Naive thymus-derived CD4-positive, alpha-beta T cell (primary cell): ENCODE measurements at regions of chr2 and their contacts with region 1.

Region 1: DNA sequence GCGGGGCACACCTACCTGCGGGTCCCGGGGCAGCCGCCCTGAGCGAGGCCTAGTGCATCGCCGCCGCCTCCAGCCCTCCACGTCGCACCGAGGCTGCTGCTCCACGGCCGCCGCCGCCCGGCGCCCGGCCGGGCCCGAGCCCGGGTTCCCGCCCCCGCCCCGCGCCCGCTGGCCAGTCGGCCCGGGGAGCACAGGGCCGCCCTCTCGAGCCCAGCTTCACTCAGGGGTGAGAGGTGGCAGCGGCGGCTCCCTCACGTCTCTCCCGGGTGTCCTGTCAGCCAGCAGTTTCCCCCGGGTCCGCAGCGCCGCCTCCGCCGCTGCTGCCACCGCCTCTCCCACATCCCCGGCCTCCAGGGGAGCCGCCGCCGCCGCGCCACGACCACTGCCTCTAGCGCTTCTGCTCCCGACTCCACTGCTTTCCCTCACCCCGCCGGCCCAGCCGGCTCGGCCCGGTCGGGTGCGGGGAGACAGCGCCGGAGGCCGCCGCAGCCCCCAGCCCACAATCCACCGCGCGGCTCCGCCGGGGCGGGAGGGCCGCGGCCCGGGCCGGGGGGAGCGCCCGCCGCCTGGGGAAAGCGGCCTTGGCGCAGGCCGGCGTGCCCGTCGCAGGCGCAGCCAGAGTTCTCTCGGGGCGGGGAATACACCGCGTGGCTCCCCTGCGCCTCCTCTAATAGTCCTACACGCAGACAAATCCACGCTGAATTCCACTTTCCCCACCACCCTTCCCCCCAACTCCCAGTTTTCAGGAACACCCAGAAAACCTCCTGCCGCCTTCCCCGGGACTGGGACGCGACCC is at the start of gene VPS54:
- DNase-seq: peak; percentile 42 to 76 (median 65)
- ATAC-seq: peak; percentile 87
- H3K4me3 ChIP-seq: peak within 1 kb of the TSS; percentile 86
- H3K4me3 Mint-ChIP-seq: peak within 1 kb of the TSS; percentile 94 to 100 (median 98)
- H3K27ac ChIP-seq: peak within 1 kb of the TSS; percentile 79
- H3K27ac Mint-ChIP-seq: peak within 1 kb of the TSS; percentile 95 to 100 (median 97)
- H3K4me1 ChIP-seq: peaks cover 22 to 31% of the 10 kb centered on the region in 2 donors
- H3K4me1 Mint-ChIP-seq: peaks cover 20 to 60% (median 48%) of the 10 kb centered on the region in 7 donors
- H3K27me3 ChIP-seq: no peaks in the 10 kb centered on the region
- H3K27me3 Mint-ChIP-seq: no peaks in the 10 kb centered on the region
- total RNA-seq, gene VPS54: 13.2 to 20.8 (median 15.6) TPM

Region 2: DNA sequence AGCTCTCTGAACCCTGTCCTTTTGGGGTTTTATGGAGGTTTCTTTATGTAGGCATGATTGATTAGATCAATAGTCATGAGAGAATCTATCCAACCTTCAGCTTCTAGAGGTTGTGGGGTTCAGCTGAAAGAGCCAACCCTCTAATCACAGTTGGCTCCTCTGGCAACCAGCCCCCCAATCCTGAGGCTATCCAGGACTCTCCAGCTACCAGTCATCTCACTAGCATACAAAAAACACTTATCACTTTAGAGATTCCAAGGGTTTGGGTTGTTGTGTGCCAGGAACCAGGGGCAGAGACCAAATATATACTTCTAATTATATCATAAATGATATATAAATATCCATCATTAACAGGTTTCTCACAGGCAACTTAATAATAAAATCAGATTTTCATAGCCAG is 442.6 kb before region 1 on chr2:
- CTCF ChIA-PET with region 1: no interaction called
- POLR2A ChIA-PET with region 1: no interaction called
- intact Hi-C with region 1: no loop called
- DNase-seq: no peak
- ATAC-seq: no peak
- H3K4me3 ChIP-seq: no peak overlapping the region
- H3K4me3 Mint-ChIP-seq: no peak overlapping the region
- H3K27ac ChIP-seq: no peak overlapping the region
- H3K27ac Mint-ChIP-seq: no peak overlapping the region
- H3K4me1 ChIP-seq: no peaks in the 10 kb centered on the region
- H3K4me1 Mint-ChIP-seq: peaks cover 0 to 16% (median 13%) of the 10 kb centered on the region in 7 donors
- H3K27me3 ChIP-seq: no peaks in the 10 kb centered on the region
- H3K27me3 Mint-ChIP-seq: no peaks in the 10 kb centered on the region

Region 3: DNA sequence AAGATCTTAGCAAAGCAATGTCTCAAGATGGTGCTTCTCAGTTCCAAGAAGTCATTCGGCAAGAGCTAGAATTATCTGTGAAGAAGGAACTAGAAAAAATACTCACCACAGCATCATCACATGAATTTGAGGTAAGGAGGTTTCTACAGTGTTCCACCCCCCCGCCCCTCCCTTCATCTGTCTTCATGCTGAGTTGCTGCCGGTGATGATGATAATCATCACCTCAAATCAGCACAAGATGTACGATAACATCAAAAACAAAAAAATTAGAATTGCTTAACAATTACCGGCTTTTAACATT is 162.9 kb before region 1 on chr2:
- CTCF ChIA-PET with region 1: no interaction called
- POLR2A ChIA-PET with region 1: no interaction called
- intact Hi-C with region 1: loop called in 1 of 2 experiments (anchors 5 kb)
- DNase-seq: peak in 7 of 9 donors; percentile 54 to 87 (median 78)
- ATAC-seq: peak; percentile 93
- H3K4me3 ChIP-seq: peak overlapping the region; percentile 28
- H3K4me3 Mint-ChIP-seq: peak overlapping the region; percentile 42 to 78 (median 73)
- H3K27ac ChIP-seq: peak overlapping the region; percentile 81
- H3K27ac Mint-ChIP-seq: peak overlapping the region; percentile 85 to 97 (median 93)
- H3K4me1 ChIP-seq: peaks cover 27 to 36% of the 10 kb centered on the region in 2 donors
- H3K4me1 Mint-ChIP-seq: peaks cover 40 to 73% (median 71%) of the 10 kb centered on the region in 7 donors
- H3K27me3 ChIP-seq: no peaks in the 10 kb centered on the region
- H3K27me3 Mint-ChIP-seq: no peaks in the 10 kb centered on the region

Region 4: GRCh38 chr2:63983986-63984605 is 35.0 kb before region 1 on chr2:
- CTCF ChIA-PET with region 1: no interaction called
- POLR2A ChIA-PET with region 1: interaction called, 3 read pairs
- intact Hi-C with region 1: loop called (anchors 5 kb)
- DNase-seq: no peak
- ATAC-seq: no peak
- H3K4me3 ChIP-seq: no peak overlapping the region
- H3K4me3 Mint-ChIP-seq: no peak overlapping the region
- H3K27ac ChIP-seq: no peak overlapping the region
- H3K27ac Mint-ChIP-seq: peak overlapping the region in 1 of 9 donors; percentile 15
- H3K4me1 ChIP-seq: peaks cover 0 to 11% of the 10 kb centered on the region in 2 donors
- H3K4me1 Mint-ChIP-seq: peaks cover 11 to 56% (median 51%) of the 10 kb centered on the region in 7 donors
- H3K27me3 ChIP-seq: no peaks in the 10 kb centered on the region
- H3K27me3 Mint-ChIP-seq: no peaks in the 10 kb centered on the region

Region 5: DNA sequence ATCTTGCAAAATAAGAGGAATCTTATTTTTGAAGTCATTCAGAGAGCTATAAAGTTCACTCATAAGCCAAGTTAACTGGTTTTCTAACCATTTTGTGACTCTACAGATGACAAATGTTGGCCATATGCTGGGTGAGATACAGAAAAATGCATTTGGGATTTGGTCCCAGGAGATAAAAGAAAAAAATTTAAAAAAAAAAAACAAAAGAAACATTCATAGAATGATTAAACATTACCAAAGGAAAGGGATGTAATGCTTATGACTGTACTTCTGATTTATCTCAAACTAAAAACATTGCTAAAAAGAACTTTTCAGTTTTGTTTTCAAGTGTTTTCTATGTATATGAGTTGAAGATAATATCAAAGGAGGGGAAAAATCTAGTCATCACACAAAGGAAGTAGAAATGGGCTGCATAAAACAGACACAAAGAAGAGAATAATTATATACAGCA is 82.0 kb after region 1 on chr2:
- CTCF ChIA-PET with region 1: no interaction called
- POLR2A ChIA-PET with region 1: no interaction called
- intact Hi-C with region 1: loop called in 1 of 2 experiments (anchors 5 kb)
- DNase-seq: peak in 6 of 9 donors; percentile 10 to 57 (median 44)
- ATAC-seq: peak; percentile 56
- H3K4me3 ChIP-seq: no peak overlapping the region
- H3K4me3 Mint-ChIP-seq: peak overlapping the region in 9 of 10 donors; percentile 18 to 83 (median 55)
- H3K27ac ChIP-seq: peak overlapping the region; percentile 33
- H3K27ac Mint-ChIP-seq: peak overlapping the region; percentile 44 to 88 (median 80)
- H3K4me1 ChIP-seq: peaks cover 0 to 16% of the 10 kb centered on the region in 2 donors
- H3K4me1 Mint-ChIP-seq: peaks cover 14 to 66% (median 60%) of the 10 kb centered on the region in 7 donors
- H3K27me3 ChIP-seq: no peaks in the 10 kb centered on the region
- H3K27me3 Mint-ChIP-seq: no peaks in the 10 kb centered on the region

Region 6: DNA sequence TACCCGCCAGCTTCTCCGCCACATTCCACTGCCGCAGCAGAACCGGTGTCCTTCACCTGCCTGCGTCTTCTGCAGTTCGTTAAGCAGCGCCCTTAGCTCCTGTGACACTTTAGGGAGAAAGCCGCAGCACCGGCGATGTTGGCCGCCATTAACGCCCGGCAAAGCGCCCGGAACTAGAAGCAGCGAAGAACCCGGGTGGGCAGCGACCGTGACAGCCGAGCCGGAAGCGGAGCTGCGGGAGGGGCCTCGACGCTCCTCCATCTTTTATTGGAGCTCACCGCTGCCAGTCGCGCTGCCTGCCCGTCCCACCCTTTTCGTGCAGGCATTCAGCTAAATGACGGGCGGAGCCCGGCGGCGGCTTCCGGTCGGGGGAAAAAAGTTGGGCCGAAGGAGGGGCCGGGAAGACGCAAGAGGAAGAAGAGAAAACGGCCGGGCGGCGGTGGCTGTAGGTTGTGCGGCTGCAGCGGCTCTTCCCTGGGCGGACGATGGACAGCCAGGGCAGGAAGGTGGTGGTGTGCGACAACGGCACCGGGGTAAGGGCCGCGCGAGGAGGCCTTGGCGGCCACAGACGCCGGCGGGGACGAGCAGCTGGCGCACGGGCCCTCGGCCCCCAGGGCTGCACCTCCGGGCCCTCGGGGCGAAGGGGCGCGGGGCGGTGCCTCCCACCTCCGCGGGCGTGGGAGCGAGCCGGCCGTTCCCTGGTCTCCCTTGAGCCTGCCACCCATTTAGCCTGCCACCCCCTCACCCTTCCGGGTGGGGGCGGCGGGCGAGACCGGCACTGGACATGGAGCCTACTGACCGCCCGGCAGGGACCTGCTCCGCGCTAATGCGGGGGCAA is 1208.5 kb after region 1 on chr2 and contains the start of gene ACTR2:
- CTCF ChIA-PET with region 1: no interaction called
- POLR2A ChIA-PET with region 1: no interaction called
- intact Hi-C with region 1: loop called in 1 of 2 experiments (anchors 5 kb)
- DNase-seq: peak; percentile 86 to 94 (median 93)
- ATAC-seq: peak; percentile 97
- H3K4me3 ChIP-seq: peak within 1 kb of the TSS; percentile 99
- H3K4me3 Mint-ChIP-seq: peak within 1 kb of the TSS; percentile 95 to 100 (median 98)
- H3K27ac ChIP-seq: peak within 1 kb of the TSS; percentile 97
- H3K27ac Mint-ChIP-seq: peak within 1 kb of the TSS; percentile 97 to 99 (median 98)
- H3K4me1 ChIP-seq: peaks cover 25 to 38% of the 10 kb centered on the region in 2 donors
- H3K4me1 Mint-ChIP-seq: peaks cover 24 to 54% (median 44%) of the 10 kb centered on the region in 7 donors
- H3K27me3 ChIP-seq: no peaks in the 10 kb centered on the region
- H3K27me3 Mint-ChIP-seq: no peaks in the 10 kb centered on the region
- total RNA-seq, gene ACTR2: 180 to 435 (median 287) TPM